ENCODE measurements at regions of chr5 and their contacts with region 1.

Region 1: GRCh38 chr5:39948867-39949468 is 524.2 kb upstream of the DAB2 start:
- DNase-seq: peak in 1 of 2 donors; percentile 71
- H3K4me3 ChIP-seq: no peak overlapping the region
- CTCF ChIP-seq: no peak
- POLR2A ChIP-seq: no peak

Region 2: DNA sequence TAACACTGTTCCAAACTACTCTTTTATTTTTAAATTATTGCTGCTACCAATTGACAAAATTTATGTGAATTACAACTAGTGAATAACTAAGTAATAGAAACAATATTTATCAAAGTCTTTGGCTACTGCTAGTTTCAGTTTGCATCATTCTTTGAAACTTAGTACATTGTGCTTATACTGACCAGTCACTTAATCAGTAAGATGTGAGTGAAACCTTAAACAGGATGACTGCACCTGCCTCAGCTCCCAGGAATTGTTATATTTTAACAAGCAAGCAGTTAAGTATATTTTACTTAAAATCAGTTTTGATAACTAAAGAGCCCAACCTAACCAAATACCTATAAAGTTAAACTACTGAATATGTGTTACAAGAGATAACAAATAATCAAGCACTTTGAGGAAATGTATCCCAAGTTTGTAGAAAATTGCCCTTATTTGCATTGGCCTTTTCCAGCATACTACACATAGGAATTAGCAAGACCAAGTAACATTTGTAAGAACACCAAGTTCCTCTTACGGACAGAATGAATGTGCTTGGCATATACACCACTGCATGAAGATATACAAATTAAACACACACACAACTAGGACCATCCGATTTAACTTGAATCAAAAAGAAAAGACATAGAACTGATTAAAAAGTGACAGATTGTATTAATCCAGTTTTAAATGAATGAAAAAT is 21.3 kb after region 1 on chr5:
- intact Hi-C with region 1: no loop called
- DNase-seq: no peak
- H3K4me3 ChIP-seq: no peak overlapping the region
- CTCF ChIP-seq: no peak
- POLR2A ChIP-seq: no peak

Region 3: DNA sequence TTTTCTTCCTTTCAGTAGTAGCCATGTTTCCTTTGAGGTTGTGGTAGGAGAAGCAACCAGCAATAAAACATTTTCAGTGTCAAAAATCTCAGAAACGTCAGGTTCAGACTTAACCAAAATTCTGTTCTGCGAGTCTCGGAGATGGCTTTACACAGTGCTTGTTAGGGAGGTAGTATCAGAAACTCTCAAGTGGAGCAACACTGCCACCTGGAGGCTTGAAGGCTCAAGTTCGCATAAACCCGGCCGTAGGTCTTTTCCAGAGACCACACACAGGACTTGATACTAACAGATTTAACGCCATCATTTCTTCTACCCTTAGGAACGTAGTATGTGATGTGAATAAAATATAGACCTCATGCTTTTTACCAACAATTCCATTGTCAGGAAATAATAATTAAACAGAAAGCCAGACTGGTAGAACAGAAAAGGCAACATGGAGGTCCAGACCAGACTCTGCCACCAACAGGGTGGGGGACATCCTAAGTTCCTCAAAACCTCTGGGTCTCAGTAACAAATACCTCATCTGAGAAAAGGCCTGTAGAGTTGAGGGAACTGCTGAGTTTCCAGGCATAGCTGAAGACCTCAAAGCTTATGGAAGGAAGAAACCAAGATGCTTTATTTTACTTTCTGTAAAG is 739.3 kb after region 1 on chr5:
- intact Hi-C with region 1: loop called (anchors 5 kb)
- DNase-seq: peak; percentile 89 to 94
- H3K4me3 ChIP-seq: no peak overlapping the region
- CTCF ChIP-seq: peak in 1 of 3 donors; percentile 65
- POLR2A ChIP-seq: no peak